ENCODE measurements at regions of chr19 and their contacts with region 1.

Region 1: GRCh38 chr19:36573020-36573885 is at the start of gene ZNF529:
- DNase-seq: peak; percentile 93
- H3K4me3 Mint-ChIP-seq: peak within 1 kb of the TSS; percentile 93
- H3K27ac Mint-ChIP-seq: peak within 1 kb of the TSS; percentile 99
- H3K4me1 Mint-ChIP-seq: peaks cover 26% of the 10 kb centered on the region
- H3K27me3 Mint-ChIP-seq: no peaks in the 10 kb centered on the region
- CTCF ChIP-seq: no peak
- total RNA-seq, gene ZNF529: 11.4 and 12.8 TPM in 2 replicates

Region 2: GRCh38 chr19:36489118-36489919 is 83.9 kb before region 1 on chr19 and contains the start of gene ZNF566:
- CTCF ChIA-PET with region 1: interaction called, 4 read pairs
- POLR2A ChIA-PET with region 1: interaction called, 15 read pairs
- intact Hi-C with region 1: no loop called
- DNase-seq: peak; percentile 96
- H3K4me3 Mint-ChIP-seq: peak within 1 kb of the TSS; percentile 98
- H3K27ac Mint-ChIP-seq: peak within 1 kb of the TSS; percentile 99
- H3K4me1 Mint-ChIP-seq: peaks cover 6% of the 10 kb centered on the region
- H3K27me3 Mint-ChIP-seq: no peaks in the 10 kb centered on the region
- CTCF ChIP-seq: no peak
- total RNA-seq, gene ZNF566: 3.9 and 6.6 TPM in 2 replicates

Region 3: GRCh38 chr19:36665832-36666231 is 92.6 kb after region 1 on chr19:
- CTCF ChIA-PET with region 1: no interaction called
- POLR2A ChIA-PET with region 1: interaction called, 23 read pairs
- intact Hi-C with region 1: loop called (anchors 10 kb)
- DNase-seq: no peak
- H3K4me3 Mint-ChIP-seq: peak overlapping the region; percentile 94
- H3K27ac Mint-ChIP-seq: peak overlapping the region; percentile 93
- H3K4me1 Mint-ChIP-seq: peaks cover 6% of the 10 kb centered on the region
- H3K27me3 Mint-ChIP-seq: no peaks in the 10 kb centered on the region
- CTCF ChIP-seq: no peak